ENCODE measurements at regions of chr20 and their contacts with region 1.

Region 1: GRCh38 chr20:43691928-43692524 is 25.1 kb downstream of the MYBL2 start:
- DNase-seq: peak in 8 of 9 donors; percentile 12 to 62 (median 26)
- ATAC-seq: peak; percentile 73
- H3K4me3 ChIP-seq: no peak overlapping the region
- H3K4me3 Mint-ChIP-seq: no peak overlapping the region
- H3K27ac ChIP-seq: no peak overlapping the region
- H3K27ac Mint-ChIP-seq: peak overlapping the region in 1 of 9 donors; percentile 36
- H3K4me1 ChIP-seq: no peaks in the 10 kb centered on the region
- H3K4me1 Mint-ChIP-seq: peaks cover 0 to 5% (median 5%) of the 10 kb centered on the region in 7 donors
- H3K27me3 ChIP-seq: no peaks in the 10 kb centered on the region
- H3K27me3 Mint-ChIP-seq: no peaks in the 10 kb centered on the region

Region 2: GRCh38 chr20:43448748-43449535 is 243.1 kb before region 1 on chr20:
- CTCF ChIA-PET with region 1: interaction called, 6 read pairs
- POLR2A ChIA-PET with region 1: no interaction called
- intact Hi-C with region 1: loop called (anchors 1 kb)
- DNase-seq: peak in 6 of 9 donors; percentile 28 to 47 (median 38)
- ATAC-seq: peak; percentile 70
- H3K4me3 ChIP-seq: no peak overlapping the region
- H3K4me3 Mint-ChIP-seq: peak overlapping the region in 1 of 10 donors; percentile 21
- H3K27ac ChIP-seq: no peak overlapping the region
- H3K27ac Mint-ChIP-seq: no peak overlapping the region
- H3K4me1 ChIP-seq: no peaks in the 10 kb centered on the region
- H3K4me1 Mint-ChIP-seq: peaks cover 0 to 8% (median 4%) of the 10 kb centered on the region in 7 donors
- H3K27me3 ChIP-seq: no peaks in the 10 kb centered on the region
- H3K27me3 Mint-ChIP-seq: peaks cover 8 to 35% (median 22%) of the 10 kb centered on the region in 5 donors

Region 3: DNA sequence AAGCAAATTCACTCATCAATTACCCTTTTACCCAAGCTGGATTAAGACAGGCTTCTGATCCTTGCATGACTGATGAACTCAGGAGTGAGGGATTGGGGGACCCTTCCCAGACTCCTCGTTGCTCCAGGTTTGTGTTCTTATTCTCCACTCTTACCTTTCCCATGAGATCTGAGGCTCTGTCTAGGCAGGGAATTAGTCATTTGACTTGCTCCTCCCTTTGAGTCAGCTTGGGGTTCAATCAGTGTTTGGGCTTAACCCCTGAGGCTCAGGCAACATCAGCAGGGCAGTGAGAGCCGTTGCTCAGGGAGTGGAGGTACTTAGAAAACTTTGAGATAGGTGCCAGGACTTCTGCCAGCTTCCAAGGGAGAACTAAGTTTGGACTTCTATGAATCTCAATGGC is 201.9 kb after region 1 on chr20:
- CTCF ChIA-PET with region 1: no interaction called
- POLR2A ChIA-PET with region 1: no interaction called
- intact Hi-C with region 1: no loop called
- DNase-seq: no peak
- ATAC-seq: no peak
- H3K4me3 ChIP-seq: no peak overlapping the region
- H3K4me3 Mint-ChIP-seq: no peak overlapping the region
- H3K27ac ChIP-seq: no peak overlapping the region
- H3K27ac Mint-ChIP-seq: no peak overlapping the region
- H3K4me1 ChIP-seq: no peaks in the 10 kb centered on the region
- H3K4me1 Mint-ChIP-seq: no peaks in the 10 kb centered on the region
- H3K27me3 ChIP-seq: no peaks in the 10 kb centered on the region
- H3K27me3 Mint-ChIP-seq: peaks cover 4 to 47% (median 10%) of the 10 kb centered on the region in 5 donors

Region 4: GRCh38 chr20:44942264-44942973 is 1250.4 kb after region 1 on chr20:
- CTCF ChIA-PET with region 1: no interaction called
- POLR2A ChIA-PET with region 1: no interaction called
- intact Hi-C with region 1: no loop called
- DNase-seq: no peak
- ATAC-seq: no peak
- H3K4me3 ChIP-seq: no peak overlapping the region
- H3K4me3 Mint-ChIP-seq: peak overlapping the region in 1 of 10 donors; percentile 34
- H3K27ac ChIP-seq: no peak overlapping the region
- H3K27ac Mint-ChIP-seq: peak overlapping the region in 6 of 9 donors; percentile 2 to 45 (median 22)
- H3K4me1 ChIP-seq: no peaks in the 10 kb centered on the region
- H3K4me1 Mint-ChIP-seq: peaks cover 0 to 11% (median 0%) of the 10 kb centered on the region in 7 donors
- H3K27me3 ChIP-seq: no peaks in the 10 kb centered on the region
- H3K27me3 Mint-ChIP-seq: no peaks in the 10 kb centered on the region